Natural killer cell (primary cell): ENCODE measurements at regions of chr13 and their contacts with region 1.

Region 1: DNA sequence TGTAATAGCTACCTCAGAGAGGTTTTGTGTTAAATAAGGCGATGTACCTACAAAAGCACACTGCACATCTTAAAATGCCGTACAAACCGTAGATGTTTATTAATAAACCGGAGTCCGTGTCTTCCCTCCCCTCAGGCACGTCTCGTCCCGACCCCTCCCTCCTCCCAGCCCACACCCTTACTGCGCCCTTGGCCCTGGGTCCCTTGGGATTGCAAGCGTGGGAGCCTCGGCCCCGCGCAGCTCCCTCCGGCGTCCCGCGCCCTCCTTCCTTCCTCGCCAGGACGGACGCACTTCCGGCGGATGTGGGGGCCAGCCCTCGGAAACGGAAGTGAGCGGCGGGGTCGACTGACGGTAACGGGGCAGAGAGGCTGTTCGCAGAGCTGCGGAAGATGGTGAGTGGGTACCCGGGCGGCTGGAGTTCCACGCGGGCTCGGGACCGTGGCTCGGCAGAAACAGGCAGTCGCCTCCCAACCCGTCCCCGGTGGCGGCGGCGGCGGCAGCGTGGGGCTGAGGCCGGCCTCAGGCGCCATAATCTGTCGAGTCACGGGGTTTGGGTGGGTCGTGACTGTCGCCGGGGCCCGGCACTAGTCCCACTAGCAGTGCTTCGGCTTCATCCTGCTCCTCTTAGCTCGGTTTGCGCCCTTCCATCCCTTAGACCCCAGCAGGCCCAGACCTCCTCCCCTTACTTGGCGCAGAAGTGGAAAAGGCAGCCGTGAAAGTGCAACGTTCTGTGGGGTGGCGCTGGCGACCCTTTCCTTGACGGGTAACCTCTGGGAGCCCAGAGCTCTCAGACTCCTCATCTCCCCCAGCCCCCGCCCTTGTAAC is at the start of gene POMP:
- DNase-seq: peak; percentile 91 to 95
- ATAC-seq: peak; percentile 85 to 93 (median 91)
- H3K4me3 ChIP-seq: peak within 1 kb of the TSS; percentile 82
- H3K4me3 Mint-ChIP-seq: peak within 1 kb of the TSS; percentile 94
- H3K27ac ChIP-seq: peak within 1 kb of the TSS; percentile 89
- H3K27ac Mint-ChIP-seq: peak within 1 kb of the TSS; percentile 93 to 96
- H3K4me1 ChIP-seq: peaks cover 17% of the 10 kb centered on the region
- H3K4me1 Mint-ChIP-seq: peaks cover 46 to 70% of the 10 kb centered on the region in 2 donors
- H3K27me3 ChIP-seq: no peaks in the 10 kb centered on the region
- H3K27me3 Mint-ChIP-seq: no peaks in the 10 kb centered on the region
- CTCF ChIP-seq: no peak
- total RNA-seq, gene POMP: 33.0 to 42.2 (median 36.0) TPM

Region 2: GRCh38 chr13:28268800-28269223 is 390.2 kb before region 1 on chr13:
- intact Hi-C with region 1: loop called (anchors 5 kb)
- DNase-seq: peak in 1 of 2 donors; percentile 38
- ATAC-seq: peak; percentile 88 to 92 (median 91)
- H3K4me3 ChIP-seq: no peak overlapping the region
- H3K4me3 Mint-ChIP-seq: peak overlapping the region; percentile 13
- H3K27ac ChIP-seq: peak overlapping the region; percentile 56
- H3K27ac Mint-ChIP-seq: peak overlapping the region; percentile 81 to 84
- H3K4me1 ChIP-seq: peaks cover 3% of the 10 kb centered on the region
- H3K4me1 Mint-ChIP-seq: peaks cover 9 to 10% of the 10 kb centered on the region in 2 donors
- H3K27me3 ChIP-seq: no peaks in the 10 kb centered on the region
- H3K27me3 Mint-ChIP-seq: no peaks in the 10 kb centered on the region
- CTCF ChIP-seq: no peak

Region 3: GRCh38 chr13:28324181-28324789 is 334.7 kb before region 1 on chr13:
- intact Hi-C with region 1: loop called (anchors 1 kb)
- DNase-seq: peak; percentile 34 to 75
- ATAC-seq: peak; percentile 71 to 88 (median 80)
- H3K4me3 ChIP-seq: no peak overlapping the region
- H3K4me3 Mint-ChIP-seq: no peak overlapping the region
- H3K27ac ChIP-seq: no peak overlapping the region
- H3K27ac Mint-ChIP-seq: no peak overlapping the region
- H3K4me1 ChIP-seq: no peaks in the 10 kb centered on the region
- H3K4me1 Mint-ChIP-seq: no peaks in the 10 kb centered on the region
- H3K27me3 ChIP-seq: no peaks in the 10 kb centered on the region
- H3K27me3 Mint-ChIP-seq: peaks cover 0 to 6% of the 10 kb centered on the region in 2 donors
- CTCF ChIP-seq: peak; percentile 72

Region 4: DNA sequence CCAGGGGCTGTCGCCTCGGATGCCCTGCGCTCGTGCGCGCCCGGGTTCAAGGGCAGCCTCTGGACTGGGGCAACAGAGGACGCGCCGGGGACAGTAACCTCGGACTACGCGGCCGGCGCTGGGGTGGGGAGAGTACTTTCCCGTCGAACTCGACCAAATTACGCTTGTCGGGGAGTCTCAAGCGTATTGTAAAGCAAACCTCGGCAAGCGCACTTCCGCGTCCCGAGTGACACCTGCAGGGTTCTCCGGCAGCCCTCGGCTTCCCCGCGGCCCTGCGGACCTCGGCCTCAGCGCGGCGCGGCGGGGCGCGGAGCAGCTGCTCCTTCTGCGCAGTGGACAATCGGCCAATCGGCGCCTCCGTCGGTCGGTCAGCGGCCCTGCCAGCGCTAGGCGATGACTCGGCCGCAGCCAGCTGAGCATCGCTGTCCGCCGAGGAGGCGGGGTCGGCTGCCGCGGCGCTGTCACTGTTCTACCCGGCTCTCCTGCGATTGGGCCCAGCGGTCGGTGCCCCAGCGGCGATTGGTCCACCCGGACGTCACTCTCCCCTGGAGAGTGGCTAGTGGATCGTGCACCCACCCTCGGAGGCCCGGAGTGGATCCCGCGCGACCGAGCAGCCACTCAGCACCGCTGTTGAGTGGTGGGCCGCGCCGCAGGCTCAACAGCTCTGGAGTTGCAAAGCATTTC is 59.7 kb after region 1 on chr13 and contains the start of gene SLC46A3:
- intact Hi-C with region 1: loop called (anchors 1 kb)
- DNase-seq: peak; percentile 97 to 98
- ATAC-seq: peak; percentile 96 to 99 (median 97)
- H3K4me3 ChIP-seq: peak within 1 kb of the TSS; percentile 82
- H3K4me3 Mint-ChIP-seq: peak within 1 kb of the TSS; percentile 99
- H3K27ac ChIP-seq: peak within 1 kb of the TSS; percentile 92
- H3K27ac Mint-ChIP-seq: peak within 1 kb of the TSS; percentile 91 to 94
- H3K4me1 ChIP-seq: peaks cover 5% of the 10 kb centered on the region
- H3K4me1 Mint-ChIP-seq: peaks cover 31 to 32% of the 10 kb centered on the region in 2 donors
- H3K27me3 ChIP-seq: no peaks in the 10 kb centered on the region
- H3K27me3 Mint-ChIP-seq: no peaks in the 10 kb centered on the region
- CTCF ChIP-seq: peak; percentile 9
- total RNA-seq, gene SLC46A3: 9.7 to 16.2 (median 11.9) TPM